Colonic mucosa (tissue), 4 donors: ENCODE measurements at regions of chr14 and their contacts with region 1.

Region 1: GRCh38 chr14:77799863-77800730 is at the start of gene ADCK1:
- DNase-seq: peak; percentile 92
- H3K4me3 ChIP-seq: peak within 1 kb of the TSS; percentile 98
- H3K27ac ChIP-seq: peak within 1 kb of the TSS; percentile 79
- H3K4me1 ChIP-seq: no peaks in the 10 kb centered on the region
- H3K27me3 ChIP-seq: no peaks in the 10 kb centered on the region
- CTCF ChIP-seq: no peak
- total RNA-seq, gene ADCK1: 7.4 to 12.1 TPM

Region 2: GRCh38 chr14:77760381-77761246 is 39.5 kb before region 1 on chr14 and contains the start of gene SNW1:
- intact Hi-C with region 1: loop called (anchors 5 kb)
- DNase-seq: peak; percentile 94
- H3K4me3 ChIP-seq: peak within 1 kb of the TSS; percentile 97
- H3K27ac ChIP-seq: peak within 1 kb of the TSS; percentile 87
- H3K4me1 ChIP-seq: peaks cover 13% of the 10 kb centered on the region
- H3K27me3 ChIP-seq: no peaks in the 10 kb centered on the region
- CTCF ChIP-seq: no peak
- total RNA-seq, gene SNW1: 69.6 to 81.9 TPM

Region 3: DNA sequence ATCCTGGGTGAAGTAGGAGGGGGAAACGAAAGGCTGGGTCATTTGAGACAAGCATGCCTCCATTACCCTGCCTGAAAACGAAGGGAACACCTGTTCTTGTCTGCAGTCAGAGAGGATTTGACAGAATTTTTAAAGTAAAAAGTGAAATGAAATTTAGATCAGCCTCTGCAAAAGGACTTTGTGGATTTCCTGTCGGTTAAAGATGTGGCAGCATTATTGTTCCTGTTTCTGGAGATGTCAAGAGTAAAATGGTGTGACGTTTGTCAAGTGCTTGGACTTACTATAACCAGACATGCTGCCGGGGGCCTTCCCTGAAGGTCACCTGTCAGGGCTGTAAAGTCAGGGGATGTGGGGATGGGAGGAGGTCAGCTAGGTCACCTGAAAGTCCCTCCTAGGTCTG is 402.1 kb after region 1 on chr14:
- intact Hi-C with region 1: no loop called
- DNase-seq: no peak
- H3K4me3 ChIP-seq: no peak overlapping the region
- H3K27ac ChIP-seq: no peak overlapping the region
- H3K4me1 ChIP-seq: no peaks in the 10 kb centered on the region
- H3K27me3 ChIP-seq: no peaks in the 10 kb centered on the region
- CTCF ChIP-seq: no peak